GM10248 (cell line): ENCODE measurements at regions of chr1 and their contacts with region 1.

Region 1: DNA sequence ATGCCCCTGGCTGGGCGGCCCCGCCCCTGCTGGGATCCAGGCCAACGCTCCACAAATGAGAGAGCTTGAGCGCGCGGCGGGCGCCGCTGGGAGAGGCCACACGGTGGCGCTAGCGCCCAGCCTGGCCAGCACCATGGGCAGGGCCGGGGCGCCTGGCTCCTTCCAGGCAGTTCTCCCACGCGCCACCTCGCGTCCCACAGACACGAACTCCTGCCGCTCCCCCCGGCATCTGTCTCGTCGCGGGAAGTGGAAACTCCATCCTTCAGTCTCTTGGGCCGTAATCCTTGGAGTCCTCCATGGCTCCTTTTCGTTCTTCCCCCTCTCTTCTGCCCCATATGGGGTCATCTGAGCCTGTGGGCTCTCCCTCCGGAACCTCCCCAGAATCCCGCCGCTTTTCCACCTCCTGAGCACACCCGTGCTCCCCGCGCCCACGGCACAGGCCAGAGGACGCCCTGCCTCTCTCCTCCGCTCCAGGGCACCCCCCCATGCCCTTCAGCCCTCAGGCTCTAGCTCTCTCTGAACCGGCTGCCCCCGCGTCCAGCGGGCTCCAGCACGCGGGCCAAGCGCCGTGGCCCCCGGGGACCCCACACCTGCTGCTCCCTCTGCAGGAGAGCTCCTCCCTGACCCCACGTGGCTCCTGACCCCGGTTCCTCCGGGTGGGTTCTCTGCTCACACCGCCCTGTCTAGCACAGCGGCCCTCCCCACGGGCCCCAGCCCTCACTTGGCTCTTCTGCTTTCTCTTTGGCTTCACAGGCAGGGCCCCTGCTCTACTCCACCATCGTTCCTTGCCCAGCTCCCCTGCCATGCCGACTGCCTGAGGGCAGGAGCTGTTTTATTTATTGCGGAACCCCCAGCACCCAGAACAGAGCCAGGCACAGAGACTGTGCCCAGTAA is 31.9 kb upstream of the EDN2 start:
- DNase-seq: peak; percentile 92
- CTCF ChIP-seq: peak; percentile 98

Region 2: GRCh38 chr1:41484372-41485241 is 31.8 kb before region 1 on chr1 and contains the start of gene EDN2:
- CTCF ChIA-PET with region 1: interaction called, 18 read pairs
- POLR2A ChIA-PET with region 1: no interaction called
- DNase-seq: no peak
- CTCF ChIP-seq: peak; percentile 29

Region 3: DNA sequence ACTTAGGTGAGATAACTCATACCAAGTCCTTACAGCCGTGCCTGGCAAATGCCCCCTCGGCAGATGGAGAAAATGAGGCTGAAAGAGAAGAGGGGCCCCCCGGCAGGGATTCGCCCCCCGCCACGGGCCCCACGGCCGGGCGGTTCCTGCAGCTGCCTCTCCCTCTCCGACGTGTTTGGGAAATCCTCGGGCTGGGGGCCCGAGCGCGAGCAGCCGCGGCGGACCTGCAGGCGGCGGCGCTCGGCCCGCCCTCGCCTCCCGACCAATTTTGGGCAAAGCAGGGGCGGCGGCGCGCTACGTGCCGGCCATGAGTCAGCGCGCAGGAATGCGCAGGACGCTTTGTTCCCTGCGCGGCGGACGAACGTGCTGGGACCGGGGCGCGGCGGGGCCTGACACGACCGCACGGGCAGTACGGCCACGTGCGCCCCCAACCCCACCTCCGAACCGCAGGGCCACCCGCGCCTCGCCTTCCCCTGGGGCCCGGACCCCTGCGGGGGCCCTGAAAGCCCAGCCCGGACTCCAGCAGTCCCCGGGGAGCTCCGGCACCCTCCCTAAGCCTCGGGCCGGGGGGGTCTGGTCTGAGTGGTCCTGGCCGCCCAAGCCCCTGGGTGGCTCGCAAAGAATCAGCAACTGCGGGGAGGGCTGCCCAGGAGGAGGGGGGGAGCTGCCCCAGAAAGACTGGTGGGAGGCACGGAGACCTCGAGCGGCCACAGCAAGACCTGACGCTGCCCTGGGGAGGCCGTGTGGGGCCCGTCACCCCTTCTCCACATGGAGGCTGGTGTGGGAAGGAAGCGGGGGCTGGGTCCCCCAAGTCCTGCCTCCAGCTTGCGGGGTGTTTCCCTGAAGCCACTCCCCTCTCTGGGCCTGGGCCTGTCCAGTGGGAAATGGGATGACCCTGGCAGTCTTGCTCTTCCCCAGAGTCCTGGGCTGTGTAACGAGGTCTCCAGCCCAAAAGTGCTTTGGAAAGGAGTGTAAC is 20.0 kb before region 1 on chr1:
- CTCF ChIA-PET with region 1: interaction called, 77 read pairs
- POLR2A ChIA-PET with region 1: no interaction called
- DNase-seq: peak; percentile 76
- CTCF ChIP-seq: peak; percentile 11

Region 4: GRCh38 chr1:41504114-41505035 is 12.0 kb before region 1 on chr1:
- CTCF ChIA-PET with region 1: interaction called, 77 read pairs
- POLR2A ChIA-PET with region 1: no interaction called
- DNase-seq: no peak
- CTCF ChIP-seq: no peak

Region 5: GRCh38 chr1:41537788-41538351 is 21.5 kb after region 1 on chr1:
- CTCF ChIA-PET with region 1: interaction called, 48 read pairs
- POLR2A ChIA-PET with region 1: no interaction called
- DNase-seq: no peak
- CTCF ChIP-seq: no peak

Region 6: DNA sequence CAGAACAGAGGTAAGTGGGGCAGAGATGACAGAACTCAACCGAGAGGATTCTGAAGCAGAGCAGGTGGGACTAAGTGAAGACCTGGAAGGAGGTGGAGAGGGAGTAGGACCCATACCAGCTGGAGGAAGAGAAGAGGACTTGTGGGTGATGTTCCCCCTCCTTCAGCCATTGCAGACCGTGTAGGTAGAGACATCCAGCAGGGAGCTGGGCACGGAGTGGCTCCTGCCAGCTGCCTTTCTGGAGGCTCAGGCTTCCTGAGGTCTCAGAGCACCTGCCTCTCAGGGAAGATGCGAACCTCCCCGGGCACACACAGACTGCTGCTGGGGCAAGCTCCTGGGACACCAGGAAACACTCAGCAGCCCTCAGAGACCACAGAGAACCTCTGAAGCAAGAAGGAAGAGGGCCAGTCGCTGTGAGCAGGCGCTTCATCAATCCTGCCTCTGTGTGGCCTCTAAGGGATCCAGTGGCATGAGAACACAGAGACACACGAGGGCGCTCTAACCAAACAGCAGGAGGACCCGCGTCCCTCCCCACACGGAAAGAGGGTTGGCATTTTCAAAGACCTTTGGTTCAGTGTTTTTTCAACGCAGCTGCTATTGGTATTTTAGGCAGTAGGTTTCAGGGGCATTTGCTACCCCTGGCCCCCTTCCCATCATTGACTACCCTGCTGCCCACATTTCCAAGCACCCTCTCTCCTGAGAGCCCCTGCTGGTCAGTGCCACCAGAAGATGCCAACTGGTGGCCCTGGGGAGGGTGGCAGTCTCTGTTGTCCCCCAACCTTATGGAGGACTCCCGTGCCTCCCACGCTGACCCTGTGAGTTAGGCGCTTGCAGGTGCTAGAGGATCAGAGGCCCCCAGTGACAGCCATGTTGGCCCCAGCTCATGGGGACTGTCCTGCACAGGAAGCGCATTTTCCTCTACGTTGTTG is 57.6 kb after region 1 on chr1:
- CTCF ChIA-PET with region 1: interaction called, 14 read pairs
- POLR2A ChIA-PET with region 1: no interaction called
- DNase-seq: peak; percentile 88
- CTCF ChIP-seq: peak; percentile 88

Region 7: DNA sequence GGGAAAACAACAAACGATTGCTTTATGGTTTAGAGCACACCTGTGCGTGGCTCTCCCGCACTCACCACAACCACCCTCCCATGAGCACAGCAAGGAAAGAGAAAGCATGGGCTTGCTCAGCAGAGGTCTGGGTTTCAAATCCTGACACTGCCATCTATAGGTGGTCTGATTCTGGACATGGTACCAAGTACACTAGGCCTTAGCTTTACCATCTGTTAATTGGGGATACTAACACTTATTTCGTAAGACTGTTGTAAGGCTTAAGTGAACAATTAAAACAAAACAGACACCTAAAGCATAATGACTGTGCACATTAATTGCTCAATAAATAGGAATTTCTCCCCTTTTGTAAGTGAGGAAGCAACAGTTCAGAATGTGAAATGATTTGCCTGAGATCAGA is 352.2 kb after region 1 on chr1:
- CTCF ChIA-PET with region 1: interaction called, 18 read pairs
- POLR2A ChIA-PET with region 1: no interaction called
- DNase-seq: peak; percentile 69
- CTCF ChIP-seq: peak; percentile 63